ENCODE measurements at regions of chr1 and their contacts with region 1.

Region 1: GRCh38 chr1:247210376-247211117 is 38.7 kb upstream of the ZNF124 start:
- DNase-seq: peak; percentile 99
- H3K4me3 Mint-ChIP-seq: peak overlapping the region; percentile 83
- H3K27ac Mint-ChIP-seq: peak overlapping the region; percentile 85
- H3K4me1 Mint-ChIP-seq: peaks cover 12% of the 10 kb centered on the region
- H3K27me3 Mint-ChIP-seq: no peaks in the 10 kb centered on the region
- CTCF ChIP-seq: no peak

Region 2: DNA sequence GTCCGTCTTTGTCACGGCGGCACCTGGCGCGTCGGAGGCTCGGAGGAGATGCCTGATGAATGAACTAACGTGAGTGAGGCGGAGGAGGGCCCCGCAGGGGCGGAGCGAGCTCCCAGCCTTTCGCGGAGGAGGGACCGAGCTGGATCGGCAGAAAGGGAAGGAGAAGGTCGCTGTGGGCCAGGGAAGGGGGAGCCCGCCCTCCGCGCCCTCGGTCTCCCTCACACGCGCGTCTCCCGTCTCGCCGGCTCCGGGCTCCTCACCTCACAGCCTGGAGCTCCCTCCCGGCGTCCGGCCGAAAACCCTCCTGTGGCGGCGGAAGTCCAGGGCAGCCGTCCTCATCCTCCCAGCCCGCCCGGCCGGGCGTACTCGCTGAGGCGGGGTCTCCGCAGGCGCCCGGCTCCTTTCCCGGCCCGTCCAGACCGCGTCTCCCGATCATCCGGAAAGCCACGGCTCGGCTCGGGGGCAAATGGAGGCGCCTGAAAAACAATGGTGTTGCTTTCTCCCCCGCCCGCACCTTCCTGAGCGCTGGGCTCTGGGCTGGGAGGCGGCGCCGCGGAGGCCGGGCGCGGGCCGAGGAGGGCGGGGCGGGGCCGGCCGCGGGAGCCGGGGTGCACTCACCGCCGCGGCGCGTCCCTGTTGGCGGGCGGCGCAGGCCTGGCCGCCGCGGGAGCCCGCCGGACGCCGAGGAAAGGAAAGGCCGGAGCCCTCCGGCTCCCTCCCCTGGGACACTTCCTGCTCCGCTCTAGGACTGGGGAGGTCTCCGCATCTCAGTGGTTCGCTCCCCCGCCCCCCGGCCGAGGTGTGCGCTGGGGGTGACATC is 120.8 kb after region 1 on chr1 and contains the start of gene ZNF496:
- CTCF ChIA-PET with region 1: no interaction called
- intact Hi-C with region 1: loop called (anchors 5 kb)
- DNase-seq: peak; percentile 92
- H3K4me3 Mint-ChIP-seq: peak within 1 kb of the TSS; percentile 92
- H3K27ac Mint-ChIP-seq: peak within 1 kb of the TSS; percentile 89
- H3K4me1 Mint-ChIP-seq: peaks cover 31% of the 10 kb centered on the region
- H3K27me3 Mint-ChIP-seq: no peaks in the 10 kb centered on the region
- CTCF ChIP-seq: no peak
- total RNA-seq, gene ZNF496: 33.4 and 36.9 TPM in 2 replicates

Measured in Calu3 (cell line).